Activated CD8-positive, alpha-beta T cell treated with anti-CD3 and anti-CD28 coated beads, Interleukin-2, amount 10 ng/mL, durations not matched to agents 7 days and 5 days (primary cell): ENCODE measurements at regions of chr9 and their contacts with region 1.

Region 1: GRCh38 chr9:89710697-89711096 is 105.9 kb downstream of the GADD45G start:
- DNase-seq: no peak
- ATAC-seq: no peak
- H3K4me3 Mint-ChIP-seq: no peak overlapping the region
- H3K27ac Mint-ChIP-seq: peak overlapping the region; percentile 40
- H3K4me1 Mint-ChIP-seq: peaks cover 77% of the 10 kb centered on the region
- H3K27me3 Mint-ChIP-seq: no peaks in the 10 kb centered on the region

Region 2: GRCh38 chr9:89721176-89721700 is 10.5 kb after region 1 on chr9:
- CTCF ChIA-PET with region 1: no interaction called
- POLR2A ChIA-PET with region 1: no interaction called
- DNase-seq: no peak
- ATAC-seq: no peak
- H3K4me3 Mint-ChIP-seq: no peak overlapping the region
- H3K27ac Mint-ChIP-seq: no peak overlapping the region
- H3K4me1 Mint-ChIP-seq: peaks cover 50% of the 10 kb centered on the region
- H3K27me3 Mint-ChIP-seq: peaks cover 2% of the 10 kb centered on the region

Region 3: DNA sequence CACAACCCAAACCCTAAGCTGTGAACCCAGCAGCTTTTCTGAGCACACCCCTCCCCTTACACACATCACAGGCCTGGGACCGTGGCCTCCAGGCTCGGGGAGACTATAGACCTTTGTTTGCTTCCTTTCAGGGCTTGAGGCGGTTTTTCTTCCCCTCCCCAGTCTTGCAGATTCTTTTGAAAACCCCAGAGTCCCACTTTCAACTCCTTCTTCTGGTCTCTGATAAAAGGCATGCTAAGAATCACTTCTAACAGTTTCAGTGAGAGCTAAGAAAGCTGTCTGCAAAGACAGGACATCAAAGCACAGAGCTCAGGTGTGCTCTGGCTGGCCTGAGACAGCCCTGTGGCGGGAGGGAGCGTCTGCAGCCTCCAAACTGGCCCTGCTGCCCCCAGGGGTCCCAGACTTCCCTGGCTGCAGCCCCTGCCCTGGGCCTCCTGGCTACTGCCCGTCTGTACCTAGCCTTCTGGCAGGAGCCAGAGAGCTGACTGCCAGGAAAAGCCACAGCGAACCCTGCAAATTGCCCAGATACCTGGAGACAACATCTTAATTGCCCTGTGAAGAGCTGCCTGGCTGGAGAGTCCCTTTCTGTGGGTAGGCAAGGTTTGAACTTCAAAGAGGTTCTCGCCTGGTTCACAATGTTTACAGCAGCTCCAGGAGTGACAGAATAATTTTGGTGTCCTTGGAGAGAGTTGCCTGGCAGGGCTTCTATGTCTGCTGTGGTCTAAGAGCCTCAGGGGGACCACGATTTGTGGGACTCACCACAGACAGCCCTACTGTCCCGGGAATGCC is 33.1 kb after region 1 on chr9:
- CTCF ChIA-PET with region 1: interaction called, 21 read pairs
- POLR2A ChIA-PET with region 1: interaction called, 6 read pairs
- DNase-seq: peak; percentile 91
- ATAC-seq: peak; percentile 86
- H3K4me3 Mint-ChIP-seq: peak overlapping the region; percentile 67
- H3K27ac Mint-ChIP-seq: peak overlapping the region; percentile 92
- H3K4me1 Mint-ChIP-seq: peaks cover 91% of the 10 kb centered on the region
- H3K27me3 Mint-ChIP-seq: no peaks in the 10 kb centered on the region